OCI-LY7 (cell line): ENCODE measurements at regions of chr3 and their contacts with region 1.

Region 1: DNA sequence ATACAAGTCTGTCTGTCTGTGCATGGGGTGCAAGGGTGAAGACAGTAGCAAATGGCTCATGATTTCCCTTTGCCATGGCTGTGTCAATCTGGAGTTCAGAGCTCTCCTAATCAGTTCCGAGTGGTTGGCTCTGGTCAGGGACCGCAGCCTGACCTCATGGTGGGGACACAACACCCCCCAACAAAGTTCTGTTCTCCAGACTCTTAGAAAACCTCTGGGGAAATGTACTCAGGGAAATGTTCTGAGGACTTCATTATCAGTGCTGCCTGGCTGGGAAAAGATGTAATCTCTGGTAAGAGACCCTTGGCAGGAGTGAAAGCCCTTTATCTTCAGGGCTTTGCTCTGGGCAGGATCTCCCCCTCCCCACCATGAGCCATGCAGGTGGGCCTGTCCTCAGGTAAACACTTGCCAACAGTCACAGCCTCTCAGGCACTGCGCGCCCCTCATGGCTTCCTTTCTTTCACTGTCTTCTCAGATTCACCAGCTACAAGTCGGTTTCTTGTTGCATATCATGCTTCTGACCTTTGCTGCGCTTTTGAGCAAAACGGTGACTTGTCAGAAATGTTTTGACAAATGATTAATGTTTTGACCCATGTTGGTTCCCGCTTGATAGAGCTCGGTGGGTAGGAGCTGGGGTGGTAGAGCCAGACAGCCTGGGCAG is 95.5 kb downstream of the ST6GAL1 start:
- DNase-seq: peak; percentile 89
- H3K4me3 ChIP-seq: peak overlapping the region; percentile 94
- H3K27ac ChIP-seq: peak overlapping the region; percentile 98
- H3K4me1 ChIP-seq: peaks cover 72% of the 10 kb centered on the region
- CTCF ChIP-seq: no peak

Region 2: GRCh38 chr3:186683979-186684378 is 341.8 kb before region 1 on chr3:
- CTCF ChIA-PET with region 1: no interaction called
- POLR2A ChIA-PET with region 1: no interaction called
- intact Hi-C with region 1: no loop called
- DNase-seq: no peak
- H3K4me3 ChIP-seq: no peak overlapping the region
- H3K27ac ChIP-seq: no peak overlapping the region
- H3K4me1 ChIP-seq: no peaks in the 10 kb centered on the region
- CTCF ChIP-seq: no peak

Region 3: GRCh38 chr3:186849374-186849975 is 176.3 kb before region 1 on chr3:
- CTCF ChIA-PET with region 1: interaction called, 3 read pairs
- POLR2A ChIA-PET with region 1: interaction called, 3 read pairs
- intact Hi-C with region 1: loop called (anchors 2 kb)
- DNase-seq: peak; percentile 85
- H3K4me3 ChIP-seq: no peak overlapping the region
- H3K27ac ChIP-seq: no peak overlapping the region
- H3K4me1 ChIP-seq: peaks cover 16% of the 10 kb centered on the region
- CTCF ChIP-seq: peak; percentile 91

Region 4: DNA sequence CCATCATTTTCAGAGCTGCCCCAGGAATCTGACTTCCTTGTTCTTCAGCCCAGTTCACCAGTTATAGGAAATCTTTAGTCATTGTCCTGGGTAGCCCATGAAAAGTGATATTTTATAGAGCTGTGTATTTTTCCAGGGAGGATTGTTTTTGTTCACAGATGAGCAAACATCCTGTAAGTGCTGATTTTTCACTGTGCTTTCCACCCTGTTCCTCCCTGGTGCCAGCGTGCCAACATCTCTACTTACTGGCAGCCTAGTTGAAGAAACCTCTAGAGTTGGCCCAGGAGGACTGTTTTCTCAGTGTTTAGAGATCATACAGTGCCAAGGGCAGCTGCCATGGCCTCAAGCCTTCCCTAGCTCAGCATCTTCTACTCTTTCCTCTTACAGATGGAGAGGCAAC is 54.2 kb before region 1 on chr3:
- CTCF ChIA-PET with region 1: no interaction called
- POLR2A ChIA-PET with region 1: no interaction called
- intact Hi-C with region 1: no loop called
- DNase-seq: no peak
- H3K4me3 ChIP-seq: no peak overlapping the region
- H3K27ac ChIP-seq: no peak overlapping the region
- H3K4me1 ChIP-seq: peaks cover 12% of the 10 kb centered on the region
- CTCF ChIP-seq: no peak

Region 5: DNA sequence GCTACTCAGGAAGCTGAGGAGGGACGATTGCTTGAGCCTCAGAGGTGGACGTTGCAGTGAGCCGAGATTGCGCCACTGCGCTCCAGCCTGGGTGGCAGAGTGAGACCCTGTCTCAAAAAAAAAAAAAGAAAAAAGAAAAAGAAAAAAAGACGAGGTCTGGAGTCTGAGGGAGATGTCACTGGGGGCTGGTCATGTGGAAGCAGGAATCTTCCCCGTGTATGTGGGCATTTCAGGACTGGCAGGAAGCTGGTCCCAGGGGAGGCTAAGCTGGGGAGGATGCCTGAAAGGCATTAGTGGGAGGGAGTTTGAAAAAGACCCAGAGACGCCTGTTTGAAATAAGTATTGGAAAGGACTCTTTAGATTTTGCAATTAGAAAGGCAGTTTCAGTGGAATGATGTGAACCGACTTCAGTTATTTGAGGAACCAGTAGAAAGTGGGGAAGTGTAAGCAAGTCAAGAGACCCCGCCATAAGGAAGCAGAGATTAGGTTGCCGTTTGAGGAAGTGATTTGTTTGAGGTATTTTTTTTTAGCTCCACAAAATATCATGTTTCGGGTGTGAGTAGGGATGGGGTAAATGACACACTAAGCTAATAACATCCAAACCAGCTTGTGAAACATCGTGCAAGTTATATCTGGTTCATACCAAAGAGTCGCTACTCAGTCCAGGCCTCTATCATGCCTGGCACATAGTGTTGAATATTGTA is 40.0 kb before region 1 on chr3:
- CTCF ChIA-PET with region 1: no interaction called
- POLR2A ChIA-PET with region 1: interaction called, 21 read pairs
- intact Hi-C with region 1: no loop called
- DNase-seq: peak; percentile 75
- H3K4me3 ChIP-seq: peak overlapping the region; percentile 54
- H3K27ac ChIP-seq: peak overlapping the region; percentile 98
- H3K4me1 ChIP-seq: peaks cover 75% of the 10 kb centered on the region
- CTCF ChIP-seq: no peak

Region 6: DNA sequence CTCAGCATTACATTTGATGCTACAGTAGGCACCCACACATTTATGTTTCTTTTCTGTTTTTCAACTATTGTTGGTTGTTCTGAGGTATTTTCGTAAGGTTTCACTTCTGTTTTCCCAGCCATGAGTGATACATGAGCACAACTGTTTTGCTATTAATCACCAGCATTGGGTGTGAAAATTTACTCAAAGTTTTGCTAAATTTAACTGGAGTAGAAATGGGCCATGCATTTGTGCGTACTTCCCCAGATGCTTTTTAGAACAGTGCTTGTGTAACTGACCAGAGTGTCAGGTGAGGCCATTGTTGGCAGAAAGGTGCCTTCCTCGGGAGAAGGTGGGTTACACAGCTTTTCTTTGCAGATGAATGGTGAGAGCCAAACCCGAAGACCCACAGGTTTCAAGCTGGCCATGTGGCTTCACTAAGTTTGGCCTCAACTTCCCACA is 25.1 kb before region 1 on chr3:
- CTCF ChIA-PET with region 1: interaction called, 8 read pairs
- POLR2A ChIA-PET with region 1: interaction called, 106 read pairs
- intact Hi-C with region 1: loop called (anchors 1 kb)
- DNase-seq: peak; percentile 92
- H3K4me3 ChIP-seq: peak overlapping the region; percentile 77
- H3K27ac ChIP-seq: peak overlapping the region; percentile 98
- H3K4me1 ChIP-seq: peaks cover 72% of the 10 kb centered on the region
- CTCF ChIP-seq: no peak

Region 7: GRCh38 chr3:187139126-187139894 is 113.5 kb after region 1 on chr3 and contains the start of gene RPL39L:
- CTCF ChIA-PET with region 1: no interaction called
- POLR2A ChIA-PET with region 1: interaction called, 3 read pairs
- intact Hi-C with region 1: loop called (anchors 5 kb)
- DNase-seq: peak; percentile 98
- H3K4me3 ChIP-seq: peak within 1 kb of the TSS; percentile 75
- H3K27ac ChIP-seq: peak within 1 kb of the TSS; percentile 86
- H3K4me1 ChIP-seq: peaks cover 15% of the 10 kb centered on the region
- CTCF ChIP-seq: peak; percentile 99
- total RNA-seq, gene RPL39L: 79.2 and 92.2 TPM in 2 replicates

Region 8: DNA sequence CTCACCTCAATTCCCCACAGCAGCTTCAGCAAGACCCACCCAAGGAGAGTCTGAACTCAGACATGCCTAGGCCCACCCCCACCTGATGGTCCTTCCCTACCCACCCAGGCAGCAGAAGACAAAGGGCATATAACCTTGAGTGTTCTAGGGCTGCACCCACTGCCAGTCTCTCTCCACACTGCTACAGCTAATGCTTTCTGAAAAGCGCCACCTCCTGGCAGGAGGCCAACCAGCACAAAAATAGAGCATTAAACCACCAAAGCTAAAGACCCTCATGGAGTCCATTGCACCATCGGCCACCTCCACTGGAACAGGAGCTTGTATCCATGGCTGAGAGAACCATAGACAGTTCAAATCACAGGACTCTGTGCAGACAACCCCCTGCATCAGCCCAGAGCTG is 124.8 kb after region 1 on chr3:
- CTCF ChIA-PET with region 1: no interaction called
- POLR2A ChIA-PET with region 1: no interaction called
- intact Hi-C with region 1: no loop called
- DNase-seq: peak; percentile 64
- H3K4me3 ChIP-seq: no peak overlapping the region
- H3K27ac ChIP-seq: no peak overlapping the region
- H3K4me1 ChIP-seq: no peaks in the 10 kb centered on the region
- CTCF ChIP-seq: peak; percentile 76